Mammary epithelial cell (primary cell): ENCODE measurements at regions of chr12 and their contacts with region 1.

Region 1: DNA sequence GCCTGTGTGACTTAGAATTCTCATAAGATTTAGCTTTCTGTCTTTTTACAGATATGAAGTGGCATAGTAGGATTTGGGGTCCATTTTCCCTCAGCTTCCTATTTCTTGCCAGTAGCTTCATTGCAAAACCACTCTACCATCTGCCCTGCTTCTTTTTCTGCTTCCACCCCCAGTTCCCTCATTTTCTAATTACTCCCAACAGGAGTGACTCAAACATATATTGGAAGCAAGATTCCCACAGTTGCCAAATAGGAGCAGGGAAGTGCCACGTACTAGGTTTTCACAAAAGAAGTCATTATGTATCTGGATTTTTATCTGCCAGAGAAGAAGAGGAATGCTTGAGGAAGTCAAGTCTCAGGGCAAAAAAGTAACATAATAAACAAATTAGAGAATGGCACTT is 64.1 kb downstream of the ANO4 start:
- DNase-seq: peak; percentile 50
- H3K4me3 ChIP-seq: no peak overlapping the region
- H3K27ac ChIP-seq: no peak overlapping the region
- H3K4me1 ChIP-seq: no peaks in the 10 kb centered on the region
- H3K27me3 ChIP-seq: no peaks in the 10 kb centered on the region
- CTCF ChIP-seq: no peak

Region 2: DNA sequence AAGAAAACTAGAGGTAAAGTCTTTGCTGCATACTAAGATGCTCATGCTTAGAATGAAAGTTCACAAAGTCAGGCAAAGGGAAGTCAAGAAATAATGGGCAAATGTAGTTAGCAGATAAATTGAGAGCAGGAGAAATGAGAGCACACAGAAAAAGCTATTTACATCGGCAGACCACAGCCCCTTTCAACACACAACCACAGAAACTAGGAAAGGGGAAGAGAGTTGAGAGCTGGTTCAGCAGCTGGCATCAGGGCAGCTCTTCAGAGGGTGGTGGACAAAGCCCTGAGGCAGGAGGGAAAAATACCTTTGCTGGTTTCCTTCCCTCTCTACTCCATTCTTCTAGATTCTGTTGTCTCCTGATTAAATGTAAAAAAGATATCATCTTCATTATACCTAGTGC is 159.4 kb before region 1 on chr12:
- CTCF ChIA-PET with region 1: no interaction called
- dilution Hi-C with region 1: no loop called
- in situ Hi-C with region 1: no loop called
- intact Hi-C with region 1: no loop called
- DNase-seq: no peak
- H3K4me3 ChIP-seq: no peak overlapping the region
- H3K27ac ChIP-seq: no peak overlapping the region
- H3K4me1 ChIP-seq: peaks cover 5% of the 10 kb centered on the region
- H3K27me3 ChIP-seq: no peaks in the 10 kb centered on the region
- CTCF ChIP-seq: no peak

Region 3: GRCh38 chr12:100767950-100768349 is 90.7 kb before region 1 on chr12:
- CTCF ChIA-PET with region 1: no interaction called
- dilution Hi-C with region 1: loop called (anchors 5 kb)
- in situ Hi-C with region 1: no loop called
- intact Hi-C with region 1: no loop called
- DNase-seq: no peak
- H3K4me3 ChIP-seq: no peak overlapping the region
- H3K27ac ChIP-seq: no peak overlapping the region
- H3K4me1 ChIP-seq: peaks cover 8% of the 10 kb centered on the region
- H3K27me3 ChIP-seq: no peaks in the 10 kb centered on the region
- CTCF ChIP-seq: no peak